ENCODE measurements at regions of chr2 and their contacts with region 1.

Region 1: GRCh38 chr2:26191316-26192159 is 18.6 kb downstream of the GAREM2 start:
- DNase-seq: peak in 2 of 4 experiments; percentile 37 to 59
- ATAC-seq: peak; percentile 53
- H3K4me3 ChIP-seq: no peak overlapping the region
- H3K27ac ChIP-seq: no peak overlapping the region
- H3K4me1 ChIP-seq: peaks cover 12% of the 10 kb centered on the region in 2 experiments; a peak in 4 of 5 replicates
- H3K27me3 ChIP-seq: no peaks in the 10 kb centered on the region
- CTCF ChIP-seq: 0 out of 6 replicates have a peak, but pooled peaks of 1 of the 3 experiments have one; percentile 5
- EP300 ChIP-seq: peak; percentile 73; the same call in 1 of the 2 replicates
- POLR2A ChIP-seq: no peak
- RAD21 ChIP-seq: no peak

Region 2: GRCh38 chr2:26054598-26055348 is 136.8 kb before region 1 on chr2:
- CTCF ChIA-PET with region 1: no interaction called
- POLR2A ChIA-PET with region 1: no interaction called
- in situ Hi-C with region 1: no loop called
- intact Hi-C with region 1: no loop called
- DNase-seq: no peak
- ATAC-seq: peak; percentile 44
- H3K4me3 ChIP-seq: no peak overlapping the region
- H3K27ac ChIP-seq: 0 out of 3 replicates have a peak overlapping the region, but pooled peaks have one; percentile 4
- H3K4me1 ChIP-seq: peaks cover 20 to 24% of the 10 kb centered on the region in 2 experiments
- H3K27me3 ChIP-seq: no peaks in the 10 kb centered on the region
- CTCF ChIP-seq: no peak
- EP300 ChIP-seq: no peak
- POLR2A ChIP-seq: no peak
- RAD21 ChIP-seq: no peak

Region 3: GRCh38 chr2:26202981-26203490 is 11.5 kb after region 1 on chr2:
- CTCF ChIA-PET with region 1: no interaction called
- POLR2A ChIA-PET with region 1: interaction called, 15 read pairs
- in situ Hi-C with region 1: no loop called
- intact Hi-C with region 1: no loop called
- DNase-seq: no peak
- ATAC-seq: no peak
- H3K4me3 ChIP-seq: no peak overlapping the region
- H3K27ac ChIP-seq: no peak overlapping the region
- H3K4me1 ChIP-seq: no peaks in the 10 kb centered on the region
- H3K27me3 ChIP-seq: no peaks in the 10 kb centered on the region
- CTCF ChIP-seq: no peak
- EP300 ChIP-seq: no peak
- POLR2A ChIP-seq: no peak
- RAD21 ChIP-seq: no peak